Esophagus muscularis mucosa (tissue), 4 donors: ENCODE measurements at regions of chr4 and their contacts with region 1.

Region 1: GRCh38 chr4:87422104-87423052 is at the start of gene NUDT9:
- DNase-seq: peak; percentile 97
- H3K4me3 ChIP-seq: peak within 1 kb of the TSS; percentile 62 to 83 (median 72)
- H3K27ac ChIP-seq: peak within 1 kb of the TSS; percentile 87 to 90 (median 88)
- H3K4me1 ChIP-seq: peaks cover 18 to 41% (median 38%) of the 10 kb centered on the region in 4 donors
- H3K27me3 ChIP-seq: no peaks in the 10 kb centered on the region
- CTCF ChIP-seq: peak in 1 of 3 experiments; percentile 5
- EP300 ChIP-seq: no peak
- POLR2A ChIP-seq: peak; percentile 30
- total RNA-seq, gene NUDT9: 15.1 to 26.6 (median 21.3) TPM

Region 2: DNA sequence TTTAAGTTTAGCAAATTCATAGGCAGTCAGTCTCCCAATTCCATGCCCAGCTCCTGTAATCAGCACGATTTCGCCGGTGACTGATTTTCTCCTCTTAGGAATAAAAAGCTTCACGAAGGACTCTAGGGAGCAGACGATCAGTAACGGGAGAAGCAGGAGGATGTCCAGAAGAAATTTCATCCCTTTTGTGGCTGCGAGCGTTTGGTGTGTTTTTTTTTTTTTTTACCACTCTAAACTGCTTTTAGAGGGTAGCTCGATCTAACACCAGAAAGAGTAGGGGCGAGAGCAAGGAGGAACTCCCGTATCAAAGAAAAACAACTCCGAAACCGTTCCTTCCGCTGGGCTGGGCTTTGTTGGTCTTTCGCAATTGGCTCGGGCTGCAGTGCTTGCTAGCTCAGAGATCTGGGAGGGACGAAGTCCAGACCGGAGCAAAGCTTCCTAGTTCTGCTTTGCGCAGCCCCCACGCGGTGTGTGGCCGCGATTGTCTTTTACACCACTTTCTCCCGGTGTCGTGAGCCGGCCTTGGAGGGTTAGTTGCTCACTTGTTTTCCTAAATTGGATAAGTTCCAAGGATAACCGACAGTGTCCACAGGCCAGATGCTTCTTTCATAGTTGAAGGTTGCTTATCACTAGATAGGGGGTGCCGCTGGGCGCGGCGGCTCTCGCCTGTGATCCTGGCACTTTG is 31.3 kb before region 1 on chr4 and contains the start of gene HSD17B11:
- intact Hi-C with region 1: loop called (anchors 1 kb)
- DNase-seq: peak; percentile 97
- H3K4me3 ChIP-seq: peak within 1 kb of the TSS; percentile 58 to 80 (median 64)
- H3K27ac ChIP-seq: peak within 1 kb of the TSS; percentile 88 to 96 (median 92)
- H3K4me1 ChIP-seq: peaks cover 10 to 42% (median 32%) of the 10 kb centered on the region in 4 donors
- H3K27me3 ChIP-seq: no peaks in the 10 kb centered on the region
- CTCF ChIP-seq: peak in 2 of 3 experiments; percentile 18 to 24
- EP300 ChIP-seq: no peak
- POLR2A ChIP-seq: peak; percentile 34
- total RNA-seq, gene HSD17B11: 35.7 to 68.9 (median 52.6) TPM

Region 3: GRCh38 chr4:88216395-88216794 is 794.0 kb after region 1 on chr4:
- intact Hi-C with region 1: no loop called
- DNase-seq: peak; percentile 47
- H3K4me3 ChIP-seq: no peak overlapping the region
- H3K27ac ChIP-seq: no peak overlapping the region
- H3K4me1 ChIP-seq: peaks cover 0 to 4% (median 3%) of the 10 kb centered on the region in 4 donors
- H3K27me3 ChIP-seq: no peaks in the 10 kb centered on the region
- CTCF ChIP-seq: no peak
- EP300 ChIP-seq: no peak
- POLR2A ChIP-seq: no peak